Mammary epithelial cell (primary cell): ENCODE measurements at regions of chr11 and their contacts with region 1.

Region 1: DNA sequence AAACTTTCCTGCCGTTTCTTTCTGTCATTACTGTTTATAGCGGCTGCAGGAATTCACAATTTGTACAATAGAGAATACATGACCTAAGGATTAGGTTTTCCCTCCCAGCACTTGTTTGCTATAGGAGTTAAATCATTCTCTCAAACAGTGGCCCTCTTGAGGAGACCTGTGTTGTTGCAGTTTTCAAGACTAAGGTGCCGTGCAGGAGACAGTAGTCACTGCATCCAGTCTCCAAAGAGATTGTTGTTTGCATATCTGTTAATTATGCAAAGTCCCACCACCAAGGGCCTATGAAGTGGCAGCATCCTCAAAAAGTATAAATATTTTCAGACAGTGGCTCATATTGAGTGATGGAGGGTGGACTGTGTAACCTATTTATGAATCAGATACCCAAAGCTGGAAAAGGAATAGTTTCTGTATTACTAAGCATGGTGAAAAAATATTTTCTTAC is 2.3 kb downstream of the PRSS23 start:
- DNase-seq: peak; percentile 78
- H3K4me3 ChIP-seq: peak overlapping the region; percentile 64 to 84 (median 71)
- H3K27ac ChIP-seq: peak overlapping the region; percentile 75
- H3K4me1 ChIP-seq: peaks cover 48% of the 10 kb centered on the region
- H3K27me3 ChIP-seq: no peaks in the 10 kb centered on the region
- CTCF ChIP-seq: peak; percentile 54 to 59

Region 2: DNA sequence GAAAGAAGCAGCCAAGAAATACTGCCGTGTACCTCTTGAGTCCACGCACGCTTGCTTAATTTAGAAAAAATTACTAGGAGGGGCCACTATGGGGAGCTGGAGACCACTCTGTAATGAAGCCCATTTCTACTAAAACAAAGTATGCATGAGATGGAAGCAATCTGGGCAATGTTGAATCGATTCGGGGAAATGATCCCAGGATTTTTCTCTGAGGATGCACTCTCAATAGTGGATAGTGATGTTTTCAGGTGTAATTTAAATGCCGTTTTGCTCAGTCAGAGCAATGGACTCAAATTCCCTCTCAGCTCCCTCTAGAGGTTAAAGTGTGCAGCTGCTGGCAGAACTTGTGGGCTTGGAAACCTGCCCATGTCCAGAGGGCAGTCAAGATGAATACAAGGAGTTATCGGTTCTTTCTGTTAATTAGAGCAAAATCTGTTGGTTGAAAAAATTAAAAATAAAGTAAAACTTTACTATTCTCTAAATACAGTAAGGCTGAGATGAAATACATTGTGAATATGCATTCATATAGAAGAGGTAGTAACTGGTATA is 194.3 kb before region 1 on chr11:
- CTCF ChIA-PET with region 1: interaction called, 4 read pairs
- dilution Hi-C with region 1: no loop called
- in situ Hi-C with region 1: no loop called
- intact Hi-C with region 1: loop called (anchors 1 kb)
- DNase-seq: peak; percentile 72
- H3K4me3 ChIP-seq: no peak overlapping the region
- H3K27ac ChIP-seq: no peak overlapping the region
- H3K4me1 ChIP-seq: peaks cover 22% of the 10 kb centered on the region
- H3K27me3 ChIP-seq: no peaks in the 10 kb centered on the region
- CTCF ChIP-seq: peak; percentile 89 to 91

Region 3: DNA sequence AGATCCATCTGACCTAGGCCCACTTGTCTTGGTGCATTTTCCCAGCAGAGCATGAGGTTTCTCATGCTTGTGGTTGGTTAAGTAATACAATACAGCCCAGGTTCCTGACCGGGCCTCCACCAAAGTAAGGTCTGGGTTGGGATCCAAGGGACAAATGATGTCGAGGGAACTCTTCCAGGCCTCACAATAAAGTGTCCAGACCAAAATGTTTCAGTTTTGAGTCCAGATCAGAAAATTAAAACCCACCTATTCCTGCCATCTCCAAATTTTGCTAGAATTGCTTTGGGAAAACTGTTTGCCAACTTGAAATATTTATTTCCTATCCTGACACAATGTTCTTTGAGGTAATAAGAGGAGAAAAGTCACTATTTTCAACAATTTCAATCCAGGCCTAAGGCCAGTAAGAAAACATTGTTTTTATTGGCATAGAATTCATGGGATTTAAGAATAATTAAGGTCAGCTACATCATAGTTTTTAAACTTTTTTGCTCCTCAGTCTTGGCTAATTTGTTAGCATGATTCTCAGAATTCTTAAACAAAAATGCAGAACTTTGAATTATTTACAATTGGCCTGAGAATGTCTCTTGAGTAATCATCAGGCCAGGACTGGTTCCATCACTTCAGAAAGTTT is 181.6 kb before region 1 on chr11:
- CTCF ChIA-PET with region 1: no interaction called
- dilution Hi-C with region 1: no loop called
- in situ Hi-C with region 1: loop called in 1 of 2 experiments (anchors 25 kb)
- intact Hi-C with region 1: loop called (anchors 1 kb)
- DNase-seq: no peak
- H3K4me3 ChIP-seq: no peak overlapping the region
- H3K27ac ChIP-seq: no peak overlapping the region
- H3K4me1 ChIP-seq: peaks cover 14% of the 10 kb centered on the region
- H3K27me3 ChIP-seq: no peaks in the 10 kb centered on the region
- CTCF ChIP-seq: no peak

Region 4: GRCh38 chr11:86671682-86672621 is 130.7 kb before region 1 on chr11 and contains the start of gene ME3:
- CTCF ChIA-PET with region 1: no interaction called
- dilution Hi-C with region 1: no loop called
- in situ Hi-C with region 1: no loop called
- intact Hi-C with region 1: loop called (anchors 5 kb)
- DNase-seq: no peak
- H3K4me3 ChIP-seq: peak within 1 kb of the TSS; percentile 28 to 56 (median 52)
- H3K27ac ChIP-seq: peak within 1 kb of the TSS; percentile 14
- H3K4me1 ChIP-seq: peaks cover 28% of the 10 kb centered on the region
- H3K27me3 ChIP-seq: no peaks in the 10 kb centered on the region
- CTCF ChIP-seq: no peak
- total RNA-seq, gene ME3: 11.2 TPM in 1 of 2 donors, not detected in the other

Region 5: GRCh38 chr11:86696004-86696403 is 106.6 kb before region 1 on chr11:
- CTCF ChIA-PET with region 1: no interaction called
- dilution Hi-C with region 1: no loop called
- in situ Hi-C with region 1: no loop called
- intact Hi-C with region 1: loop called (anchors 1 kb)
- DNase-seq: peak; percentile 86
- H3K4me3 ChIP-seq: no peak overlapping the region
- H3K27ac ChIP-seq: peak overlapping the region; percentile 64
- H3K4me1 ChIP-seq: peaks cover 49% of the 10 kb centered on the region
- H3K27me3 ChIP-seq: no peaks in the 10 kb centered on the region
- CTCF ChIP-seq: no peak

Region 6: DNA sequence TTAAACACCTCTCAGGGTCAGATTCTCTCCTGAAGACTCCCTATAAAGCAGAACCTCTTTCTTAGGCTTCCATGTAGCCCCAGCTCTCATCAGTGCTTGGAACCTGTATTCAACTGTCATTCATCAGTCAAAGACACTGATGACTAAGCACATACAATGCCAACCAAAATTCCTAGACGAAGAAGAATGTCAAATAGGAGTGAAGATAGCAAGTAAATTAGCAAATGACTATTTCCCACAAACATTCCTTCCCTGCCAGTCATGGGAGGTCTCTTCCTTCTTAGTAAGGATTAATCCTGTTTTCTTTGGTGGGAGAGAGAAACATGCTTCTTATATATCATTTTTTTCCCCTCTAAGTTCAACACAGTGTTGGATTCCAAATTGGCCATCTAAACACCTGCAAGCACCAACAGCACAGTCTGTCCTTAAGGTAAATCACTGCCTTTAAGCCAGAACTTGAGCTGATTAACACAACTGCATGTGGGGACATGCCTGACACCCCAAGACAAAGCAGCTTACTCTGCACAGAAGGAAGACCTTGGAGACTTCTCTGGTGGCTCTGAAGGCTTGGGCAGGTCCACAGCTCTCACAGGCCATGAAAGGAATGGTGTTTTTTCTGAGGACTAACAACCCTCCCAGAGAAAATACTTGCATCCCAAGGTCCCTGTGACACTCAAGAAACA is 82.7 kb before region 1 on chr11:
- CTCF ChIA-PET with region 1: interaction called, 6 read pairs
- dilution Hi-C with region 1: no loop called
- in situ Hi-C with region 1: no loop called
- intact Hi-C with region 1: loop called (anchors 5 kb)
- DNase-seq: peak; percentile 87
- H3K4me3 ChIP-seq: no peak overlapping the region
- H3K27ac ChIP-seq: peak overlapping the region; percentile 33
- H3K4me1 ChIP-seq: peaks cover 57% of the 10 kb centered on the region
- H3K27me3 ChIP-seq: no peaks in the 10 kb centered on the region
- CTCF ChIP-seq: no peak

Region 7: DNA sequence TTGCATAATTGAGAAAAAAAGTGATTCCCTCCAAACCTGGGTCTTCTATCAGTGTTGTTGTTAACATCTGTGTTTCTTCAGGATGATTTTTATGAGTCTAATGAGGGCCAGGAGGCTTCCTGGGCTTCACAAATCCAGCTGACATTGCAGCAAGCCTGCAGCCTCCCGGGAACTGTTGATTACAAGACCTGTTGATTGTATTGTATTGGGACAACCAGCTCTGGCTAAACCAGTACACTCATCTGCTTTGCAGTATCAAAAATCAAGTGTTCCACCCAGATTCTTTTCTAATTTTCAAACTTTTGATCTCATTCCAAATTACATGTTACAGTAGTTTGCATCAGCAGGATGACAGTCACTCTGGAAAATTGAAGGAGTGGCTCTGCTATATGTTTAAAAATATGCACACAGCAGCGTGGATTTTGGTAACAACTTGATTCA is 18.4 kb before region 1 on chr11:
- CTCF ChIA-PET with region 1: no interaction called
- dilution Hi-C with region 1: no loop called
- in situ Hi-C with region 1: no loop called
- intact Hi-C with region 1: loop called (anchors 2 kb)
- DNase-seq: no peak
- H3K4me3 ChIP-seq: no peak overlapping the region
- H3K27ac ChIP-seq: no peak overlapping the region
- H3K4me1 ChIP-seq: no peaks in the 10 kb centered on the region
- H3K27me3 ChIP-seq: no peaks in the 10 kb centered on the region
- CTCF ChIP-seq: no peak